SK-N-SH (cell line): ENCODE measurements at regions of chr4 and their contacts with region 1.

Region 1: DNA sequence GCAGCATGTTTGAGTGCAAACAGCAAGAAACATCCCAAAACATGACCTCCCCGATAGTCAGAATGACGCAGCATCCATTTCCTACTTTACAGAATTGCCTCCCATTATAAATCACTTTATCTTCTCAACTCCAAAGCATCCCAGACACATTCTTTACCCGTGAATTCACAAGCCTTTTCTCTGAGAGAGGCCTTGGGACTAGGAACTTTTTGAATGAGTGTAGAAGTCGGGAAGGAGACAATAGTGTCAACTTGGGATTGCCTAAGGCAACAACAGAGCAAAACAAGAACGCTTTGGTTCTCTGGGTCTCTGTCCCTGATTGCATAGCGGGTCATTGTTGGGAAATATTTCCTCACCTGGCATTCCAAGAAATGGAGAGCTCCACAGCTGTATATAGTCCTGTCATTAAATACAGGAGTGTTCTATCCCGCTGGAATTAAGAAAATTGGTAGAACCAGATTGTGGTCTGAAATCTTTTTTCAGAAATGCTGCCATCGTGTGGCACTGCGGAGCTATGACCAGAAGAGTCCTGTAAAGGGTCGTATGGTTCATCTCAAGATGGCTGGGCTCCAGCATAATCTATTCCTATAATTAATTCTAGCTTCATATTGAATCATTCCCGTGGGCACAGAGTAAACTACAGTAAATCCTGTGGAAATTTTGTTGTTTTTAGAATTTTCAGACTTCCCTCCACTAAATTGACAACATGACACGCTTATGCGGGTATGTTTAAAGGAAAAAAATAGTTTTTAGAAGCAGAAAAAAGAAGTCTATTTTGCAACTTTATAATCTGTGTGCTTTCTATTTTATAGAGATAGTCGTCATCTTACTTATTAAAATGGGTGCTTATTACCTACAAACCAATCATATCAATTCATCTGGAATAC is 2.0 kb upstream of the SPP1 start:
- DNase-seq: peak; percentile 66
- H3K4me3 ChIP-seq: peak overlapping the region; percentile 29 to 36; a peak in 3 of 4 replicates
- H3K27ac ChIP-seq: peak overlapping the region in 1 of 2 experiments; percentile 69; a peak in 2 of 4 replicates
- H3K4me1 ChIP-seq: no peaks in the 10 kb centered on the region; a peak in 1 of 4 replicates
- H3K27me3 ChIP-seq: peaks cover 10% of the 10 kb centered on the region; the same call in 1 of the 2 replicates
- CTCF ChIP-seq: peak; percentile 88
- EP300 ChIP-seq: no peak
- RAD21 ChIP-seq: peak; percentile 77

Region 2: DNA sequence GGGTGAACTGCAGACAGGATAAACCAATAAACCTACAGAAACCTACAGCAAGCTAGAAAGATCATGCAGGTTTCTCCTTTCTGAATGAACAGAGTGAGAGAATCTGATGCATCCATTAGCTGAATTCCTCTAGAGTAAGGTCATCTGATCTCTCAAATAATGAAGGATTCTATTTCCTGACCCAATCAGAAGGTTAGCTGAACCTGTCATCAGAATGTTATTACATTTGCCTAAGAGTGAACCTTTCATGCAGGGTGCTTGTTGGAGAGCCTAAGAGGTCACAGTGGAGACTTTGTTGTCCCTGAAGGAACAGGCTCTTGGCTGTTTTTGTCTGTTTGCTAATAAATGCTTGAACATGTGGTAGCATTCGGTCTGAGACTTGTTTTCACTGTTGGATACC is 116.7 kb before region 1 on chr4:
- CTCF ChIA-PET with region 1: interaction called, 182 read pairs
- POLR2A ChIA-PET with region 1: no interaction called
- DNase-seq: no peak
- H3K4me3 ChIP-seq: no peak overlapping the region
- H3K27ac ChIP-seq: no peak overlapping the region
- H3K4me1 ChIP-seq: no peaks in the 10 kb centered on the region
- H3K27me3 ChIP-seq: no peaks in the 10 kb centered on the region
- CTCF ChIP-seq: no peak
- EP300 ChIP-seq: no peak
- RAD21 ChIP-seq: no peak

Region 3: DNA sequence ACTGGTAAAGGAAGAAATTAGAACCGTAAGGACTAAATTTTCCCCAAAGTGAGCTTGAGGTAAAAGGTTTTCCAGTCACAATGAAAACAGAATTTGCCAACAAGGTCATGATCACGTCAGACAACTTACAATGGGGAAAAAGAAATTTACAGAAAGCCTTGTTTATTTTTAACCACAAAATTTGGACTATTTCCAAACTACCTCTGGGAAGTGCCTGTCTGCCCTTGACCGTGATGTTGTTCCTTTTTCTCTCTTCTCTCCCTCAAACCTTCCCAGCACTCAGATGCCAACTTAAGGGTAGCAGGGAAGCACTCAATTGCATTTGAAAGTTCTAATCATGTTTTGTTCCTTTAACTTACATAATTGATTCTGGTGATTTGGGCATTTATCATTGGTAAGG is 108.2 kb before region 1 on chr4:
- CTCF ChIA-PET with region 1: interaction called, 15 read pairs
- POLR2A ChIA-PET with region 1: no interaction called
- DNase-seq: no peak
- H3K4me3 ChIP-seq: no peak overlapping the region
- H3K27ac ChIP-seq: no peak overlapping the region
- H3K4me1 ChIP-seq: no peaks in the 10 kb centered on the region
- H3K27me3 ChIP-seq: no peaks in the 10 kb centered on the region
- CTCF ChIP-seq: no peak
- EP300 ChIP-seq: no peak
- RAD21 ChIP-seq: no peak

Region 4: GRCh38 chr4:87953826-87954225 is 19.7 kb before region 1 on chr4:
- CTCF ChIA-PET with region 1: interaction called, 21 read pairs
- POLR2A ChIA-PET with region 1: no interaction called
- DNase-seq: no peak
- H3K4me3 ChIP-seq: no peak overlapping the region
- H3K27ac ChIP-seq: no peak overlapping the region
- H3K4me1 ChIP-seq: no peaks in the 10 kb centered on the region
- H3K27me3 ChIP-seq: no peaks in the 10 kb centered on the region
- CTCF ChIP-seq: no peak
- EP300 ChIP-seq: no peak
- RAD21 ChIP-seq: no peak

Region 5: DNA sequence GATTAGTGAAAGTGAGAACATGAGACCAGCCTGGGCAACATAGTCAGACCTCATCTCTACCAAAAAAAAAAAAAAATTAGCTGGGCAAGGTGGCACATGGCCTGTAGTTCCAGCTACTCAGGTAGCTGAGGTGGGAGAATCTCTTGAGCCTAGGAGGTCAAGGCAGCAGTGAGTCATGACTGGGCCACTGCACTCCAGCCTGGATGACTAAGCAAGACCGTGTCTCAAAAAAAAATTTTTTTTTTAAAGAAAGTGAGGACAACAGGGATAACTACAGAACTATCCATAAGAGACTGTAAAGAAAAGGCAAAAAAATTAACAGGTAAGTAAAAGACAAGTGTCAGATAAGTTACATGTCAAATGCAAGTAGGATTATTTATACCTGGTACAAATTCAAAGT is 11.5 kb before region 1 on chr4:
- CTCF ChIA-PET with region 1: interaction called, 26 read pairs
- POLR2A ChIA-PET with region 1: no interaction called
- DNase-seq: no peak
- H3K4me3 ChIP-seq: no peak overlapping the region
- H3K27ac ChIP-seq: no peak overlapping the region
- H3K4me1 ChIP-seq: no peaks in the 10 kb centered on the region
- H3K27me3 ChIP-seq: no peaks in the 10 kb centered on the region
- CTCF ChIP-seq: no peak
- EP300 ChIP-seq: no peak
- RAD21 ChIP-seq: no peak

Region 6: DNA sequence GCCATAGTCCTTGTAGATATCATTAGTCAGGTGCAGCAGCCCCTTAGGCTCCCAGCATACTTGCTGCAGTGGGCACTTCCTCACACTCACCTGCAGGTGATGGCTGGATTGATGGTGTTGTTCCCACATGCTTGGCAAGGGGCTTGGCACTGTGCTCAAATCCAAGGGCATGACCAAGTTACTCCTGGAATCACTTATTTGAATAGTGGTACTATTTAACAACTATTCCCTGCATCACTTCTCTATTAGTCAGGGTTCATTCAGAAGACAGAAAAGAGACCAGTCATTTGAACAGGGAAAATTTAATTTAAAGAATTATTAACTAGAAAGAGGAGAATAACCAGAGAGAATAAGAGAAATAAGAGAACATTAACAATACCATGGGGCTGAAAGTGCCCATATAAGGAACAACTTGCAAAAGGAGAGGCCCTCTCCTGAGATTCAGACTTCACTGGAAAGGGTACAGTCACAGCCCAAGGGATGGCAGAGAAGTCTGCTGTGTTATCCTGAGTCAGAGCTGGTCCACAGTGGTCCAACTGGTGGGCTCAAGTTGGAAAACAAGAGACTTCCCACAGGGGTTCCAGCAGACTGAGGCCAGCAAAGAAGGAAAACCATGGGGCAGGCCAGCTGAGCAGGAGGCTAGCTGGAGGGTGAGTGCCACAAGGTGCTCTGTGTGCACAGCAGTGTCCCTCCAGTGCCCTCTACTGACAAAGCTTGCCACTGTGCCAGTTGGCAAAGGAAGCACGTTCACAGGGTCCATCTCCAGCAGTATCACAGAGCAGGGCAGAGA is 11.8 kb after region 1 on chr4:
- CTCF ChIA-PET with region 1: interaction called, 73 read pairs
- POLR2A ChIA-PET with region 1: no interaction called
- DNase-seq: peak; percentile 67
- H3K4me3 ChIP-seq: no peak overlapping the region
- H3K27ac ChIP-seq: no peak overlapping the region
- H3K4me1 ChIP-seq: no peaks in the 10 kb centered on the region
- H3K27me3 ChIP-seq: no peaks in the 10 kb centered on the region
- CTCF ChIP-seq: peak; percentile 64
- EP300 ChIP-seq: no peak
- RAD21 ChIP-seq: peak; percentile 81